ENCODE measurements at regions of chr2 and their contacts with region 1.

Region 1: GRCh38 chr2:42086500-42086953 is 38.7 kb downstream of the PKDCC start:
- DNase-seq: peak; percentile 71
- CTCF ChIP-seq: peak; percentile 62

Region 2: DNA sequence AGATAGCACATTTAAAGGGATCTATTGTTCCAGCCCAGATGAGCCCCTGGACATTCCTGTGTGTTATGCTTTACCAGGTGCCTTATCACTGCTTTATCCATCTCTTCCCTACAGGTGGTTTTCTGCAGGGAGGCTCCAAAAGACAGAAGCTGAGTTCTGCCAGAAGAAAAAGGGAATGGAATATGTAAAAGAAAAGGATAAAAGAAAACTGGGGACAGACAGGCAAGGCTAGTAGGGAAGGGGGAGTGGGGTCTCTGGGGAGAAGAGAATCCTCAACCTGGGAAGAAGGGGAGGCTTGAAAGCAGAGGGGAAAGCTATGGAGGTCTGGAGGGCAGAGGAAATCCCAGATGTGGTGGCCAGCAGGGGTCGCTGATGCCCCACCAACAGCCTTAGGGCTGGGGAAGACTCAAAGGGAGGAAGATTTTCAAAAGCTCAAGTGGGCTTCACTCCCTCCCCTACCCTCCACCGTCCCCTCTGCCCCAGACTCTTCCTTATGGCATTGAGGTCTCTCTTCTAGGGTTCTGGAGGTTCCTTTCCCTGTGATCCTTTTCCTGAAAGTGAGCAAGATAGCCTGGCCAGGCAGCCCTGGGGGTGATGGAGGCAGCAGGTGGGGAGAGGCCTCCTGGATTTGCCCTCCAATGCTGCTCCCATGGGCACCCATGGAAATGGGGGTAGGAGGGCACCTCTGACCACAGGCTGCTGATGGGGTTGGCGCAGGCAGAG is 216.8 kb before region 1 on chr2:
- CTCF ChIA-PET with region 1: interaction called, 651 read pairs
- POLR2A ChIA-PET with region 1: no interaction called
- DNase-seq: peak; percentile 77
- CTCF ChIP-seq: peak; percentile 76

Region 3: DNA sequence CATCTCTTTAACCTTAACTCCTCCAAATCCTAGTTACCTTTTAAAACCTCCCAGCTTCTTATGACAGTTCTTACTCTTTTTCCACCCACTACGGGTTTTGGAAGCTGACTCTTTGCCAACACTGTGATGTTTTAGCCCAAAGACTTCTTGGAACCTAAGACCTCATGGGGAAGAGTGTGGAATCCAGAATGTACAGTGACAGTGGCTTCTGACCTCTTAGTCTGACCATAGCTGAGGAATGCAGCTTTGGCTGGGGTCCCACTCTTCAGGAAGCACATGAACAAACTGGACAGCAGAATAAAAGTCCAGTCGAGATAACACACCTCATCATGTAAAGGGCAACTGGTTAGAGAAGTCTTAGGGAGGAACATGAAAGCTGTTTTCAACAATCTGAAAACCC is 199.8 kb before region 1 on chr2:
- CTCF ChIA-PET with region 1: interaction called, 15 read pairs
- POLR2A ChIA-PET with region 1: no interaction called
- DNase-seq: no peak
- CTCF ChIP-seq: no peak

Region 4: DNA sequence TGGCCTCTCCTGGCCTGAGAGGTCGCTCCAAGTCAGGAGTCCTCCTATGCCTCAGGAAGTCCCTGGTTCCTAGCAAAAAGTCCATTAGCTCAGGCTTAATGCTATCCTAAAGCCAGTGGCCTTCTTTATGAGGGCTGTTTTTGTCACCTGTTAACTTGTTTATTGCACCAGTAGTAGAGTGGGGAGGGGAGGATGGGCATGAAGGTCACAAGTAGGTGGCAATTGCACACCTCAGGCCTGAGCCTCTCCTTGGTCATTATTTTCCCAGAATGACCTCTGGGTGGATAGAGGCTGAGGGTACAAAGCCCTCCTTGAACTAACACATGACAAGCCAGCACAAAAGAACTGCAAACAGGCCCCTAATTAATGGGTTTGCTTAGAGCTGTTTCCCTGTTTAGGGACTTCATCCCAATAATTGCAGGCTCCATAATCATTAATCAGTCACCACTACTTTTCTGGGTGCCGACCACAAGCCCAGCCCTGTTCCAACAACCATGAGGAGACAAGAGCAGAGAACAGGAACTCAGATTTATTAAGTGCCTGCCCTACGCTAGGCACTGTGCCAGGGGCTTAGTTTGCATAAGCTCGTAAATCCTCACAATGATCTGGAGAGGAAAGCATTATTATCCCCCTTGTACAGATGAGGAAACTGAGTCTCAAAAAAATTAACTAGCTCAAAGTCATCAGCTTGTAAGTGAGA is 161.7 kb before region 1 on chr2:
- CTCF ChIA-PET with region 1: no interaction called
- POLR2A ChIA-PET with region 1: no interaction called
- DNase-seq: no peak
- CTCF ChIP-seq: no peak

Region 5: GRCh38 chr2:42060718-42061619 is 25.6 kb before region 1 on chr2:
- CTCF ChIA-PET with region 1: interaction called, 16 read pairs
- POLR2A ChIA-PET with region 1: no interaction called
- DNase-seq: no peak
- CTCF ChIP-seq: no peak

Region 6: GRCh38 chr2:42105330-42106256 is 19.1 kb after region 1 on chr2:
- CTCF ChIA-PET with region 1: interaction called, 11 read pairs
- POLR2A ChIA-PET with region 1: no interaction called
- DNase-seq: peak; percentile 61
- CTCF ChIP-seq: no peak